H1 (cell line): ENCODE measurements at regions of chr6 and their contacts with region 1.

Region 1: DNA sequence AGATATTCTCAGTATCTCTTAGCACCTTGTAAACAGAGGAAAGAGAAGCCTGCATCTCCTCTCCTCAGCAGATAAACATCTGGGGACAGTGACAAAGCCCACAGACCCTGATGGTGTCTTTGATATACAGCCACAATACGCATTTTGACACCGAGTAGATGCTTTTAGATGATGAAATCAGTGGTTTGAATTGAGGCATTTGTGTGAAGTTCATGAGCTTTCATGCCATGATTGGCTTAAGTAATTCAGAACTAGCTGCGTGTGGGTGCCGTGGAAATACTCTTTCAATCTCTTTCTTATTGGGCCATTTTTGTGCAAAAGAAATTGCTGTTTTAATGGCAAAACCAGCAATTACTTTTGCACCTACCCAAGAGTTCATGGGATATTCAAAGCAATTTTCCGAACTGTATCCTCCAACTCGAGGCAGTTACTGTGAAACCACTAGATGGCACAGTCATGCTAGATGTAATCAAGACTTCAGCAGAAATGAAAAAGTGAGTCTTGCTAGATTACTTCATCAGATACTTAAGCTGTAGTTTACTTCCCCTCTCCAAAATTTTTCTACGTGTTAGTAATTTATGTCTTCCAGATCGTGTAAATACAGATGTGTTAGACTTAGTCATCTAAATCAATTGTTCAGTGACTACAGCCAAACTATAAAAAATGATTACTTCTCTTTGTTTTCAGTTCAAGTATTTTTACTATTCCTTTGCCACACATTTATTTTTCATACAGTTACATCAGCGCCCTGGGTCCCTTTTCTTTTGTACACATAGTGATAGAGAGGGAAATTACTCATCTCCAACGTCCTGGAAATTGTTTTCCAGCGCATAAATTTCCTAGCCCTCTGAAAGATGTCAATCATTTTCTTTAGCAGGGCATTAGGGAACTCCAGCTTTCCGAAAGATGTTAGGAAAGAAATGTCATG is 49.4 kb downstream of the IYD start:
- DNase-seq: no peak
- H3K4me3 ChIP-seq: no peak overlapping the region
- H3K27ac ChIP-seq: no peak overlapping the region
- H3K4me1 ChIP-seq: no peaks in the 10 kb centered on the region
- H3K27me3 ChIP-seq: no peaks in the 10 kb centered on the region
- CTCF ChIP-seq: peak in 2 of 3 experiments; percentile 75 to 81; a peak in 3 of 4 replicates
- EP300 ChIP-seq: no peak
- POLR2A ChIP-seq: no peak
- RAD21 ChIP-seq: peak; percentile 88 to 92

Region 2: GRCh38 chr6:150220634-150221551 is 197.3 kb before region 1 on chr6:
- CTCF ChIA-PET with region 1: no interaction called
- POLR2A ChIA-PET with region 1: no interaction called
- DNase-seq: no peak
- H3K4me3 ChIP-seq: no peak overlapping the region
- H3K27ac ChIP-seq: no peak overlapping the region
- H3K4me1 ChIP-seq: no peaks in the 10 kb centered on the region; a peak in 3 of 7 replicates
- H3K27me3 ChIP-seq: no peaks in the 10 kb centered on the region
- CTCF ChIP-seq: no peak
- EP300 ChIP-seq: no peak
- POLR2A ChIP-seq: no peak
- RAD21 ChIP-seq: no peak

Region 3: DNA sequence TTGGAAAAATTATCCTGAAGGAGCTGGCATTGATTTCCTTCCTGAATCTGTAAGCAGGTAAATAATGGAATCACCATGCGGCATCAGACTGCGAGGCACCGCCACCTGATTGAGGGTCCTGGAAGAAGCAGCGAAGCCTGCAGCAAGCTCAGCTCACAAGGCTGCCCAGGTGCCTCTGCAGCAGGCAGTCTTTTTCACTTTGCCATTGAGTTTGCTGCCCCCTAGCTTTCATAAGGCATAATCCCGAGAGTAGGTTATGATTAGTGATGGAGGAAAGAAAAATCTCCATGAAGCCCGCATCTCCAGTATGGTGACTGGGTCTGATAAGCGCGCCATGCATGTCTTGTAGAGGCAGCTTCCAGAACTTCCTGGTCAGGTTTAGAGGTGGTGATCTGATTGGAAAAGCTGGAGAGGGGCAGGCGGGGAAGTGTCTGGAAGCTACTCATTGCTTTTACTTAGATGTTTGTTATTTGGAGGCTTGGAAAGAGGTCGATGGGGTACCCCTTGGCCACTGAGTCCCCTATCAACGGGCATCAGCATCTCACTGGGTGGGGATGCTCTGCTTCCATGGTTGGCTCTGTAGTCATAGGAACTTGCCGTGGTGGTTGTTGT is 22.7 kb before region 1 on chr6:
- CTCF ChIA-PET with region 1: interaction called, 15 read pairs
- POLR2A ChIA-PET with region 1: no interaction called
- DNase-seq: peak; percentile 51 to 53
- H3K4me3 ChIP-seq: no peak overlapping the region
- H3K27ac ChIP-seq: no peak overlapping the region
- H3K4me1 ChIP-seq: no peaks in the 10 kb centered on the region; a peak in 1 of 7 replicates
- H3K27me3 ChIP-seq: no peaks in the 10 kb centered on the region
- CTCF ChIP-seq: peak; percentile 43 to 79 (median 73)
- EP300 ChIP-seq: no peak
- POLR2A ChIP-seq: no peak
- RAD21 ChIP-seq: peak; percentile 83 to 90

Region 4: DNA sequence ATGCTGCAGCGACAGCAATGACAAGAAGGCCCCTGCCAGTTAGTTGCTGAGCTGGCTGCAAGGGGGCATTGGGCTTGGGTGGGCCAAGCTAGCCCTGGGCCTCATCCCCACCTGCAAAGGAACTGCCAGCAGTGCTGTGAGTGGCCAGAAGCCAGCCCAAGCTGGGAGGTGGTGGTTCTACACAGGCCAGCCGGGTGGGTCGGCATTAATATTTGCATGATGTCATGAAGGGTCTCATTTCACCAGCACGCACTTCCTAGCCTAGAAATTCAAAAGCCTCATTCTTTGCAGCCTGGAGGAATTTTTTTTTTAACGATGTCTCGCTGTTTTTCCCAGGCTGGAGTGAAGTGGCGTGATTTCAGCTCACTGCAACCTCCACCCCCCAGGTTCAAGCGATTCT is 12.7 kb after region 1 on chr6:
- CTCF ChIA-PET with region 1: interaction called, 17 read pairs
- POLR2A ChIA-PET with region 1: no interaction called
- DNase-seq: no peak
- H3K4me3 ChIP-seq: no peak overlapping the region
- H3K27ac ChIP-seq: no peak overlapping the region
- H3K4me1 ChIP-seq: no peaks in the 10 kb centered on the region
- H3K27me3 ChIP-seq: no peaks in the 10 kb centered on the region
- CTCF ChIP-seq: no peak
- EP300 ChIP-seq: no peak
- POLR2A ChIP-seq: no peak
- RAD21 ChIP-seq: no peak

Region 5: GRCh38 chr6:150435832-150436231 is 17.7 kb after region 1 on chr6:
- CTCF ChIA-PET with region 1: interaction called, 17 read pairs
- POLR2A ChIA-PET with region 1: no interaction called
- DNase-seq: no peak
- H3K4me3 ChIP-seq: no peak overlapping the region
- H3K27ac ChIP-seq: no peak overlapping the region
- H3K4me1 ChIP-seq: no peaks in the 10 kb centered on the region
- H3K27me3 ChIP-seq: no peaks in the 10 kb centered on the region
- CTCF ChIP-seq: no peak
- EP300 ChIP-seq: no peak
- POLR2A ChIP-seq: no peak
- RAD21 ChIP-seq: no peak

Region 6: DNA sequence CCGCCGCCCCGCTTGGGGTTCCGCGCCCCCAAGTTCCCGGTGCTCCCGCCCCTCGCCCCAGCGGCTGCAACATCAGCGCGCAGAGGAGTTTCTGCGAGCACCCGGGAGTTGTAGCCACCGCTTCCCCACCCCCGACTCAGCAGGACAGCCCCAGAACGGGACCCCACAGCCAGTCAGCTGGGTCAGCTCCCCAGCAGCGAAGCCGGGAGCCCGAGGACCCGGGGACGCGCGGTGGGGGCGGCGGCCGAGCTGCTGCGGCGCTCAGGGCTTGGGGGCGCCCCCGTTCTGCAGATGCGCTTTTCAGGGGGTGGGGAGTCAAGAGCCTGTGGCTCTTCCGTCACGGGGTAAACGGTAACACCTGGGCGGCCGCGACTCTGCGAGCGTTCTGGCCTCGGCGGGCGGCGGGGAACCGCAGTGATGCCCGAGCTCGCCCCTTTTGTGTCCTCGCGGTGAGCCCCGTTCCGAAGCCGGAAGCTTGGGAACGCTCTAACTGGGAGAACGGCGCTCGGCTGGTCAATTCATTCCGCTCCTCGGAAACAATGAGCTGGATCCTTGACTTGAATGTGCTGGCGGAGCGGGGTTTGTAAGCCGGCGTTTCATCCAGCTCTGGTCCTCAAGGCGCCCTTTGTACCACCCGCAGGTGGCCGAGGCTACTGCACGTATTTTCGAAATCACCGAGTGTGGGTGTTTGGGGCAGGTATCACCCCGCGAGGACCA is 182.3 kb after region 1 on chr6:
- CTCF ChIA-PET with region 1: interaction called, 11 read pairs
- POLR2A ChIA-PET with region 1: interaction called, 4 read pairs
- DNase-seq: peak; percentile 54 to 73
- H3K4me3 ChIP-seq: peak overlapping the region; percentile 56 to 83 (median 65)
- H3K27ac ChIP-seq: no peak overlapping the region
- H3K4me1 ChIP-seq: peaks cover 0 to 2% (median 0%) of the 10 kb centered on the region in 4 experiments; a peak in 2 of 7 replicates
- H3K27me3 ChIP-seq: peaks cover 15 to 41% (median 28%) of the 10 kb centered on the region in 4 experiments
- CTCF ChIP-seq: peak; percentile 49 to 57 (median 51)
- EP300 ChIP-seq: no peak; a peak in 1 of 3 replicates
- POLR2A ChIP-seq: no peak
- RAD21 ChIP-seq: peak; percentile 51 to 63

Region 7: GRCh38 chr6:150685860-150686259 is 267.7 kb after region 1 on chr6:
- CTCF ChIA-PET with region 1: interaction called, 16 read pairs
- POLR2A ChIA-PET with region 1: no interaction called
- DNase-seq: peak; percentile 64 to 89
- H3K4me3 ChIP-seq: no peak overlapping the region
- H3K27ac ChIP-seq: no peak overlapping the region
- H3K4me1 ChIP-seq: no peaks in the 10 kb centered on the region
- H3K27me3 ChIP-seq: no peaks in the 10 kb centered on the region
- CTCF ChIP-seq: peak; percentile 85 to 99 (median 99)
- EP300 ChIP-seq: no peak
- POLR2A ChIP-seq: no peak
- RAD21 ChIP-seq: peak; percentile 77 to 87

Region 8: GRCh38 chr6:150741633-150742504 is 323.7 kb after region 1 on chr6:
- CTCF ChIA-PET with region 1: interaction called, 16 read pairs
- POLR2A ChIA-PET with region 1: no interaction called
- DNase-seq: no peak
- H3K4me3 ChIP-seq: no peak overlapping the region
- H3K27ac ChIP-seq: no peak overlapping the region
- H3K4me1 ChIP-seq: no peaks in the 10 kb centered on the region
- H3K27me3 ChIP-seq: no peaks in the 10 kb centered on the region
- CTCF ChIP-seq: peak; percentile 27 to 63 (median 52)
- EP300 ChIP-seq: no peak
- POLR2A ChIP-seq: no peak
- RAD21 ChIP-seq: peak; percentile 63 to 71